Sciatic nerve (tissue), 2 donors: ENCODE measurements at regions of chr2 and their contacts with region 1.

Region 1: GRCh38 chr2:71190656-71191569 is 36.0 kb downstream of the PAIP2B start:
- DNase-seq: no peak
- ATAC-seq: no peak

Region 2: DNA sequence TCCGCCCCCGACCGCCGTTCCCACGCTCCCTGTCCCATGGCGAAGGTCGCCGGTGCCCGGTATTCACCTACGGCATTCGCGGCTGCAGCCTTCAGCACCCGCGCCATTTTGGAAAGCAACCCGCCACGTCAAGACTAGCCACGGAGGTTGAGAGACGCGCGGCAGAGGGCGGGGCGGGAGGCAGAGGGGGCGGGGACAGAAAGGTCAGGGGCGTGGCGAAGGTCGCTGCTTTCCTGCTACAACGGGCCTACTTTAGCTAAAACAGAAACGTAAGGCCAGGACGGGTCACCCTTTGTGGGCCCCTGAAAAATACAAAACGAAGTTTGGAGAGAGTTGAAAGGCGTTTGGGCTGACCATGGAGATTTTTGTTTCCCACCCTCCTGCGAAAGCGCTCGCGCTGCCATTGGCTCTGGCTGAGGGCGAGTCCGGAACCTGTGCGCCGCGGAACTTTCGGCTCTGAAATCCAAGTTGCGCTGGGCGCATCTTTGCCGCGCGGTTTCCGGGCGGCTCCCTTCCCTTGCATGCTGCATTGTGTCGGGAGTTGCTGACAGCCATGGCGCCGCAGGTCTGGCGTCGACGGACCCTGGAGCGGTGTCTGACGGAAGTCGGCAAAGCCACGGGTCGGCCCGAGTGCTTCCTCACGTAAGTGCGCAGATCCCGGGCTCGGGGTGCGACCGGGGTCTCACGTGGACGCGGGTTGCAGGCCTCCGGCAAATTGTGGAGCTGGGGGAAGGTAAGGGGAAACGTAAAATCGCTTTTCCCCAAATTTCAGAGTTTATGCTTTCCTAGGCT is 60.6 kb before region 1 on chr2 and contains the starts of genes MCEE and MPHOSPH10:
- intact Hi-C with region 1: no loop called
- DNase-seq: peak; percentile 94
- ATAC-seq: peak; percentile 99
- total RNA-seq, gene MCEE: 25.1 TPM
- total RNA-seq, gene MPHOSPH10: 36.5 TPM

Region 3: DNA sequence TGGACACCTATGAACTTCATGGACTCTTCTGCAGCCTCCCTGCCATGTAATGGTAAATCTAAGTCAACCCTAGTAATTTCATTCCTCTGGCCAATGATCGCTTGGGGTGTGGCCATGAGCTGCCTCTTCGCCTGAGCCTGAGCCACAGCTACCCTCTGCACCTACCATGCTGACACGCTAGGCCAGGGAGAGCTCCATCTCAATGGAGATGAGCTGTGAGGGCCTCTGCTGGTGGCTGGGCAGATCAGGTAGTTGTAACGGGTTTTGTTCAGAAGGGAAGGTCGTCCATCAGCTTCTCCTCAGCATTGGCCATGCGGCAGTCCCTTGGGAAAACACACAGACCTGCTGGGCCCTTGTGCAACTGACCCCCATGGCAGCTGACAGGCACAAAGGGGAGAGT is 36.1 kb before region 1 on chr2:
- intact Hi-C with region 1: loop called (anchors 2 kb)
- DNase-seq: no peak
- ATAC-seq: no peak